H1 (cell line): ENCODE measurements at regions of chr22 and their contacts with region 1.

Region 1: GRCh38 chr22:48979482-48979881 is 848.2 kb downstream of the BRD1 start:
- DNase-seq: no peak
- H3K4me3 ChIP-seq: no peak overlapping the region
- H3K27ac ChIP-seq: no peak overlapping the region
- H3K4me1 ChIP-seq: peaks cover 0 to 3% (median under 1%) of the 10 kb centered on the region in 4 experiments; a peak in 3 of 7 replicates
- H3K27me3 ChIP-seq: peaks cover 0 to 2% (median 0%) of the 10 kb centered on the region in 4 experiments; a peak in 1 of 7 replicates
- CTCF ChIP-seq: peak; percentile 26 to 80 (median 61)
- EP300 ChIP-seq: no peak
- POLR2A ChIP-seq: no peak
- RAD21 ChIP-seq: peak; percentile 68 to 81

Region 2: DNA sequence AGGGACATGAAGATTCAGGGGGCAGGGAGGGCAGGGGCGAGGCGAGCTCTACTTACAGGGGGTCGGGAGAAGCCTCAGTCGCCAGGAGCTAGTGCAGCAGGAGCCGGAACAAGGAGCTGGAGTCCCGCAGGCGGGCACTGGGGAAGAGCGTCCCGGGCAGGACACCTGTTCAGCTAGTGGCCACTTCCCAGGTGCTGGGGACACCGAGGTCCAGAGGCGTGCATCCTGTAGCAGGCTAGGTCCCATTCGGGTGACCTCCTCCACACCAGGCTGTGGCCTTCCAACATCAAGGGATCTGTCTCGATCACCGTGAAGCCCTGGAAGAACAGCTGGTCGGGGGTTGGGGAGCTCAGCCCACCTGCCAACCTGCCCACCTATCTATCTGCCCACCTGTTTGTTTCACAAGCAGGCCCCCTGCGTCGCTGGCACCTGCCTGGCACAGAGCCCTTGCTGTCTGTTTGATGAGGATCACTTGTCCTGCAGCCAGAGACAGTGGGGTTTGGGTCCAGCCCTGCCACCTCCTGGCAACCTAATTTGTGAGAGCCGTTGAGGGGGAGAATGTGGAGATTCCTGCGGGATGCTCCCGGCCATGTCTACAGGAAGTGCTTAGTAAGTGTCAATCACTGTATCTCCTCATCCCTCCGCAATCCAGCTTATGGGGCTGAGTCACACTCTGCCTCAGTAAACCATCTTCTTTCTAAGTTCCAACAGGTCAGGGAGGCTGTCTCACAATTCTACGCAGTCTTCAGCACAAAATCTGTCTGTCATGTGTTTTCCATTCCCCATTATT is 92.7 kb before region 1 on chr22:
- CTCF ChIA-PET with region 1: no interaction called
- POLR2A ChIA-PET with region 1: no interaction called
- DNase-seq: no peak
- H3K4me3 ChIP-seq: no peak overlapping the region
- H3K27ac ChIP-seq: no peak overlapping the region
- H3K4me1 ChIP-seq: peaks cover 0 to 5% (median 0%) of the 10 kb centered on the region in 4 experiments; a peak in 1 of 7 replicates
- H3K27me3 ChIP-seq: peaks cover 0 to 4% (median 3%) of the 10 kb centered on the region in 4 experiments; a peak in 4 of 7 replicates
- CTCF ChIP-seq: no peak
- EP300 ChIP-seq: no peak
- POLR2A ChIP-seq: no peak
- RAD21 ChIP-seq: no peak

Region 3: GRCh38 chr22:48968201-48968959 is 11.1 kb before region 1 on chr22:
- CTCF ChIA-PET with region 1: interaction called, 44 read pairs
- POLR2A ChIA-PET with region 1: no interaction called
- DNase-seq: peak in 1 of 2 experiments; percentile 66
- H3K4me3 ChIP-seq: no peak overlapping the region
- H3K27ac ChIP-seq: no peak overlapping the region
- H3K4me1 ChIP-seq: no peaks in the 10 kb centered on the region; a peak in 1 of 7 replicates
- H3K27me3 ChIP-seq: no peaks in the 10 kb centered on the region
- CTCF ChIP-seq: peak; percentile 79 to 91 (median 85)
- EP300 ChIP-seq: no peak
- POLR2A ChIP-seq: no peak
- RAD21 ChIP-seq: peak; percentile 78 to 85